A549 (cell line): ENCODE measurements at regions of chr19 and their contacts with region 1.

Region 1: DNA sequence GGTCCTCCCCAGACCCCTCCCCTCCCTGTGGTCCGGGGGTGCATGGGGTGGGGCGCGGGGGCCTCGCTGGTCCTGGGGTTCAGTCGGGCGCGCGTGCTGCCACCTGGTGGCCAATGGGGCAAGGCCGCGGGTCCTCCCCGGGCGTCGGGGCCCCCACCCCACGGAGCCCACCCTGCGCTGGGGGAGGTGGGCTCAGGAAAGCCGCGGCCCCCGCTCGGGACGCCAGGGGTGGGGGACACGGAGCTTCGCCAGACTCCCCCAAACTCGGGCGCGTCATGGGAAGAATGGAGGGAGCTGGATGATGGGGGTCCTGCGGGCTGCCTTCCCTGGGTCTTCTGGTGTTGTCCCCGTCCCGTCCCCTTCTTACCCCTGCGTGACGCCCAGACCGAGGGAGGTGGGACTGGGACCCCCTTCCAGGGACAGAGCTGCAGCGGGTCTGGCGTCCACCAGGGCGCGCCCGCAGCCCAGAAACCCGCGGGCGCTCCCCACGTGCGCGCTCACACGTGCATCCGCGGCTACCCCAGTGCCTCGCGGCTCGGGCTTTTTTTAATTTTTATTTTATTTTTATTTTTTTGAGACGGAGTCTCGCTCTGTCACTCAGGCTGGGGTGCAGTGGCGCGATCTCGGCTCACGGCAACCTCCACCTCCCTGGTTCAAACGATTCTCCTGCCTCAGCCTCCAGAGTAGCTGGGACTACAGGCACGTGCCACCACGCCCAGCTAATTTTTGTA is 19.8 kb upstream of the TCF3 start:
- DNase-seq: peak in 1 of 2 experiments; percentile 31
- ATAC-seq: peak; percentile 63 to 74; a peak in 4 of 6 replicates
- H3K4me3 ChIP-seq: peak overlapping the region; percentile 49
- H3K27ac ChIP-seq: peak overlapping the region; percentile 74 to 91
- H3K4me1 ChIP-seq: peaks cover 9% of the 10 kb centered on the region; the same call in 1 of the 3 replicates
- CTCF ChIP-seq: peak; percentile 79
- EP300 ChIP-seq: no peak
- POLR2A ChIP-seq: no peak
- RAD21 ChIP-seq: peak; percentile 80 to 96

Region 2: DNA sequence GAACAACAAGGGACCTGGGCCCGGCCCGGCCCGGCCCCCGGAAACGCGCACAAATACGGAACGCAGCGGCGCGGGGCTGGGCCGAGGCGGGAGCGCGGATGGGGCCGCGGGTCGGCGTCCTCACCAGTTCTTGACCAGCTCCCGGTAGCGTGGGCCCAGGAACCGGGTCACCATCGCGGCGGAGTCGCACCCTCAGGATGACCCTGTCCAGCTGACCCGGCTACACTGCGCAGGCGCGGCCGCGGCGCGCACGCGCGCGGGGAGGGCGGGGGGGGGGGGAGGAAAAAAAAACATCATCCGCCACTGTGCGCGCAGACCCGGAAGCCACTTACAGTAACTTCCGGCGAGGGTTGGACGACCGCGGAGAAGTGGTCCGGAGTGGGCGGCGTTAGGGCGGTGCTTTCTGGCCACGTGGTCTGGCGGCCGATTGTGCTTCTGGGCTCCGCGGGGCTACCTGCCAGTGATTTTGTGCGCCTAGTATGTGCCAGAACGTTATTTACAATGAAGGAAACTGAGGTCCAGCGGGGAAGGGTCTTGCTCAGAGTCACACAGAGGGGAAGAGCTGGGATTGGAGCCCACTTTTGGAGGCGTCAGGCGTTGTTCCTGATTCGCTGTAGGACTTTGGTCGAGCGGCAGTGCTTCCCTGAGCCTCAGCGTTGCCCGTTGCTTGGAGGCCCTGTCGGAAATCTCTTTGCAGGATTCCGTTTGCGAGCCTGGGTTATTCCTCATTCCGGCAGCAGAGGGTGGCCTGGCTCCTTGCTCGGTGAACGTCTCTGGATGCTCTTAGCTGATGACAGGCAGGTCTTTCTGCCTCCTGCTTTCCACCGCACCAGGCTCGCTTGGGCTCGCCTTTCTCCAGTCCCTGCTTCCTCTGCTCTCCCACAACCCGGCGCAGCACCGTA is 66.7 kb before region 1 on chr19 and contains the start of gene UQCR11:
- CTCF ChIA-PET with region 1: interaction called, 13 read pairs
- POLR2A ChIA-PET with region 1: interaction called, 3 read pairs
- DNase-seq: peak; percentile 88 to 94
- ATAC-seq: peak; percentile 93
- H3K4me3 ChIP-seq: peak within 1 kb of the TSS; percentile 96
- H3K27ac ChIP-seq: peak within 1 kb of the TSS; percentile 90 to 98
- H3K4me1 ChIP-seq: peaks cover 13% of the 10 kb centered on the region
- CTCF ChIP-seq: 0 out of 3 replicates have a peak, but pooled peaks have one; percentile 15
- EP300 ChIP-seq: no peak
- POLR2A ChIP-seq: peak; percentile 61
- RAD21 ChIP-seq: peak; percentile 44 to 48; a peak in 4 of 5 replicates
- polyA plus RNA-seq, gene UQCR11: 111 and 136 TPM in 2 replicates

Region 3: DNA sequence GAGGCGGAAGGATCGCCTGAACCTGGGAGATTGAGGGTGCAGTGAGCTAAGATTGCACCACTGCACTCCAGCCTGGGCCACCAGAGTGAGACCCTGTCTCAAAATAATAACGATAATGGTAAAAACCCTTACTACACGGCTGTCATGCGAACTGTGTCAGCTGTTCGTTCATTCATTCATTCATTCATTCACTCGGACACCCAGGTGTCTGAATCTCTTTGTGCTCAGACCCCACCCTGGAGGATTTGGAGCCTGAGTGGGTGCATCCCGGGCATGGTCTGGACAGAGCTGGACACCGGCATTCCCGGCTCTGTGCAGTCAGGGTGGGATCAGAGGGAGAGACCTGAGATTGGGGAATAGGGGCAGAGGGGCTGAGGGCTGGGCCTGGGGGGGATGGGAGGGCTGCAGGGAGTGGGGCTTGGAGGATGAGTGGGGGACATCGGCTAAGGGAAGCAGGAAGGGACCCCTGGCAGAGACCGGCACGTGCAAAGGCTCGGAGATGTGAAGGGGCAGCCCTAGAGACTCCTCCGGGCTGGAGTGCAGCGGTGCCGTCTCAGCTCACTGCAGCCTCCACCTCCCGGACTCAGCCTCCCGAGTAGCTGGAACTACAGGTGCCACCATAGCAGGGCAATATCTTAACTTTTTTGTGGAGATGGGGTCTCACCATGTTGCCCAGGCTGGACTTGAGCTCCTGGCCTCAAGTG is 11.8 kb after region 1 on chr19:
- CTCF ChIA-PET with region 1: interaction called, 44 read pairs
- POLR2A ChIA-PET with region 1: no interaction called
- DNase-seq: no peak
- ATAC-seq: peak in 1 of 2 experiments; percentile 51; a peak in 1 of 6 replicates
- H3K4me3 ChIP-seq: no peak overlapping the region
- H3K27ac ChIP-seq: no peak overlapping the region
- H3K4me1 ChIP-seq: no peaks in the 10 kb centered on the region
- CTCF ChIP-seq: no peak
- EP300 ChIP-seq: no peak
- POLR2A ChIP-seq: no peak
- RAD21 ChIP-seq: no peak

Region 4: DNA sequence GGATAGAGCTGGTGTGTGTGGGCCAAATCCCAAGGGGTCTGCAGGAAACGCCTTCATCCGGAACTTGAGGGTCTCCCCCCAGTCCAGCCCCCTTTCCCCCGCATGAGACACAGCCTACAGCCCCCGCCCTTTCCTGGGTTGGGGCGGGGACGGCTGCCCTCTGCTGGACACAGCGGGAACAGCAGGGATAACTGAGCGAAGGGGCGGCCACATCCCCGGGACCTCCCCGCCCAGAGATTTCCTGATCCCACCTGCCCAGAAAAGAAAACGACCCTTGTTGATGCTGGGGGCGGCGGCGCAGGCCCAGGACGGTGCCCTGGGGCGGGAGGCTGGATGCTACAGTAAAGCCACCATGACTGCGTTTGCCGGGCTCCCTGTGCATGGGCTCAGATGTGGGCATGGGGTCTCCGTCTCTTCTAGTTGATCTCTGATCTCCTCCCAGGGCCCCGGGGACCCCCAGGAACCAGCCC is 95.3 kb after region 1 on chr19:
- CTCF ChIA-PET with region 1: interaction called, 66 read pairs
- POLR2A ChIA-PET with region 1: no interaction called
- DNase-seq: peak in 1 of 2 experiments; percentile 71
- ATAC-seq: peak in 1 of 2 experiments; percentile 77; a peak in 3 of 6 replicates
- H3K4me3 ChIP-seq: no peak overlapping the region
- H3K27ac ChIP-seq: no peak overlapping the region
- H3K4me1 ChIP-seq: no peaks in the 10 kb centered on the region
- CTCF ChIP-seq: peak; percentile 77
- EP300 ChIP-seq: no peak
- POLR2A ChIP-seq: no peak
- RAD21 ChIP-seq: peak; percentile 76 to 81

Region 5: DNA sequence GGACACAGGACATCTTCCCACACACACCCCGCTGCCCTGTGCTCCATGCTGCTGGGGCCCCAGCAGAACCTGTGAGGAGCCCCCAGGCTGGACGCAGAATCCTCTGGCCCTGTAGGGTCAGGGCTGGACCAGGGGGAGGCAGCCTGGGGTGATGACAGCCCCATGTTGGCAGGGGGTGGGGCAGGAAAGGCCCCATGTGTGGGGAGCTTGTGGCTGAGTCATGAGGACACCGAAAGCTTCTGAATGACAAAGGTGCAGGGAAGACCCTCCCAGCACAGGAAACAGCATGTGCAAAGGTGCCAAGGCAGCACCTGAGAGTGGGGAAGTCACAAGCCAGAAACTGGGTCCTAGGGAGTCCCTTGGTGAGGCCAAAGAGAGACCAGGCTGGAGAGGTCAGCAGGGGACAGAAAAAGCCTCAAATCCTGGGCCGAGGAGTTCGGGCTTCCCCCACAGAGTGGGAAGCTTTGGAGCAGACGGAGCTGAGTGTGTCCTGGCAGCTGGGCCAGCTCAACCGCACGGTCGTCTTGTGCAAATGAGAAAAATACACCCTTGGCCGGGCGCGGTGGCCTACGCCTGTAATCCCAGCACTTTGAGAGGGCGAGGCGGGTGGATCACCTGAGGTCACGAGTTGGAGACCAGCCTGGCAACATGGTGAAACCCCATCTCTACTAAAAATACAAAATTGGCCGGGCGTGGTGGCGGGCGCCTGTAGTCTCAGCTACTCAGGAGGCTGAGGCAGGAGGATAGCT is 122.4 kb after region 1 on chr19:
- CTCF ChIA-PET with region 1: interaction called, 146 read pairs
- POLR2A ChIA-PET with region 1: no interaction called
- DNase-seq: no peak
- ATAC-seq: no peak
- H3K4me3 ChIP-seq: no peak overlapping the region
- H3K27ac ChIP-seq: no peak overlapping the region
- H3K4me1 ChIP-seq: no peaks in the 10 kb centered on the region
- CTCF ChIP-seq: no peak
- EP300 ChIP-seq: no peak
- POLR2A ChIP-seq: no peak
- RAD21 ChIP-seq: no peak

Region 6: GRCh38 chr19:1825909-1826556 is 153.8 kb after region 1 on chr19:
- CTCF ChIA-PET with region 1: interaction called, 37 read pairs
- POLR2A ChIA-PET with region 1: no interaction called
- DNase-seq: peak; percentile 62 to 88
- ATAC-seq: peak; percentile 85 to 89
- H3K4me3 ChIP-seq: no peak overlapping the region
- H3K27ac ChIP-seq: peak overlapping the region in 1 of 2 experiments; percentile 51; a peak in 2 of 6 replicates
- H3K4me1 ChIP-seq: peaks cover 10% of the 10 kb centered on the region
- CTCF ChIP-seq: peak; percentile 65
- EP300 ChIP-seq: no peak
- POLR2A ChIP-seq: no peak
- RAD21 ChIP-seq: peak; percentile 62 to 68